ENCODE measurements at regions of chr14 and their contacts with region 1.

Region 1: DNA sequence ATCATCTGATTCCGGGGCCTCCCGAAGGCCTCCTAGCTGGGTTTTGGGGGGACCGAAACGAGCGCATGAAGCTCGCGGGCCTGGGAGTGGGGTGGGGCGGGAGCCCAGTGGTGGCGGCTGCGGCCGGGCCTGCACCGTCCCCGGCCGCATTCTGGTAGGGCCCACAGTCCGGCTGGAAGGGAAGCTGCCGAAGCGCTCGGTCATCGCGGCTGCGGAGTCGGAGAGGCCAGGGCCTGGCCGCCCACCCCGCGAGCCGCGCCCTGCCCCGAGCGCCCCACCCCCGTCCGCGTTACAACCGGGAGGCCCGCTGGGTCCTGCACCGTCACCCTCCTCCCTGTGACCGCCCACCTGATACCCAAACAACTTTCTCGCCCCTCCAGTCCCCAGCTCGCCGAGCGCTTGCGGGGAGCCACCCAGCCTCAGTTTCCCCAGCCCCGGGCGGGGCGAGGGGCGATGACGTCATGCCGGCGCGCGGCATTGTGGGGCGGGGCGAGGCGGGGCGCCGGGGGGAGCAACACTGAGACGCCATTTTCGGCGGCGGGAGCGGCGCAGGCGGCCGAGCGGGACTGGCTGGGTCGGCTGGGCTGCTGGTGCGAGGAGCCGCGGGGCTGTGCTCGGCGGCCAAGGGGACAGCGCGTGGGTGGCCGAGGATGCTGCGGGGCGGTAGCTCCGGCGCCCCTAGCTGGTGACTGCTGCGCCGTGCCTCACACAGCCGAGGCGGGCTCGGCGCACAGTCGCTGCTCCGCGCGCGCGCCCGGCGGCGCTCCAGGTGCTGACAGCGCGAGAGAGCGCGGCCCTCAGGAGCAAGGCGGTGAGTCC is at the start of gene KLC1:
- DNase-seq: peak; percentile 58 to 95 (median 90)

Region 2: DNA sequence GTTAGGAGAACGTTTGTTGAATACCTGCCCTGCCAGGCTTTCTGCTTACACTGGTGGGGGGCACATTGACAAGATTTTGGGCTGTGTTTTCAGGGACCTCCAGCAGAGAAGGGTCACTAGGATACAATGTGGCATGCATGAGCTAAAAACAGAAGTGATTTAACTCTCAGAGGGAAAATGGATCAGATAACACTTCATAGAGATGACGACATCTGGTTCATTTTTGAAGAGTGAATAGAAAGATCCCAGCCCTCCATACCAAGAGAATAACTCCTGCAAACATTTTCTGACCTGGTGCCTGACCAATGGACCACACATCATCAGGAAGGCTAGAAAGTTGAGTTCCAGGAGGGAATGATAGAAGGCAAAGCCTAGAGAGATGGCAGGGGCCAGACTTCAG is 139.9 kb before region 1 on chr14:
- intact Hi-C with region 1: no loop called
- DNase-seq: no peak

Region 3: DNA sequence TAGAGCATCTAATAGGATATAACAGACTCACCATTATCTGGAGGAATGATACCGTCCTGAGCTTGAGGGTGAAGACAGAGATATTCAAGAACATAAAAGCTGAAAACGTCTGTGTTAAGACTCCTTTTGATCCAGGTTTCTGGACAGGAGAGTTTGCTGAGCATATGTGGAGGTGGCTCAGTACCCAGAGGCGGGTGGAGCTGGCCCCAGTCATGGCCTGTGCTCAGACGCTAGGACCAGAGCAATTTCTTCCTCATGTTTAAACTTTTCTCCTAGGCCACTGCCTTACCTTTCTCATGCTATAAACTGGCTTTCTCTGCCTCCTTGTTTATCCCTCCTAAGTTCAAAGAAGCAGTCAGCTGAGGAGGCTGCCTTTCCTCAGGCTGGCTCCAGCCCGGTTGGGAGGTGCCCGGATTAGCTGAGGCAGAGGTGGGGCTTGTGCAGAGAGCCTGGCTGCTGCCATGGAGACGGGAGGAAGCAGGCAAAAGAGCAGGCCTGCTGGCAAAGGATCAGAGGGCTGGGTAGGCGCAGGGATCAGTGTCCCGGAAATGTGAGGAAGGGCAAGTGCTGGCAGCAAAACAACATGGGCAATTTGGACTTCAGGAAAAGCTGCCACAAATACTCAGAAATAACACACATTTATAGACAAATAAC is 52.4 kb before region 1 on chr14:
- intact Hi-C with region 1: loop called (anchors 10 kb)
- DNase-seq: peak; percentile 52 to 95 (median 83)

Region 4: GRCh38 chr14:103699901-103700752 is 71.2 kb after region 1 on chr14:
- intact Hi-C with region 1: loop called (anchors 10 kb)
- DNase-seq: peak in 41 of 42 donors; percentile 46 to 90 (median 78)

Region 5: DNA sequence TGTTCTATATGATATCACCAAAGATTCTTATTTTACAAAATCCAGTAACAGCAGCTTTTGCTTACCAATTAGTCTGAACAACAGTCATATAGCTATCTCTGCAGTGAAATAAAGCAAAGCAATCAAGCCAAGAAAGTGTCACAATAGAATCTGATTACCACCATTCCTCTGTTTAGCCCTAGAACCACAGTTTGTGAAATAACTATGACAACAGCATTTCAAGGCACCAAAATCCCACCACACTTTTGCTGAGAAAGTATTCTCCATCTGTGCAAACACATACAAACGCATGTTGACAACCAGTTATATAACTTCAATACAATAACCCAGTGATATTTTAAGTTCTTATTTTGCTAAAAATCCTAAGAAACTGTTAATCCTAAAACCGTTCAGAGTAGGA is 211.1 kb after region 1 on chr14:
- intact Hi-C with region 1: no loop called
- DNase-seq: no peak

Measured in head of caudate nucleus (tissue), 42 donors.